ENCODE measurements at regions of chr15 and their contacts with region 1.

Region 1: GRCh38 chr15:41774062-41774881 is at the start of gene MAPKBP1:
- DNase-seq: peak; percentile 99
- H3K4me3 ChIP-seq: peak within 1 kb of the TSS; percentile 35 to 69 (median 56)
- H3K27ac ChIP-seq: peak within 1 kb of the TSS; percentile 48
- H3K4me1 ChIP-seq: peaks cover 54% of the 10 kb centered on the region
- H3K27me3 ChIP-seq: no peaks in the 10 kb centered on the region
- CTCF ChIP-seq: peak; percentile 93 to 94
- POLR2A ChIP-seq: no peak
- total RNA-seq, gene MAPKBP1: 49.1 and 55.8 TPM in 2 replicates

Region 2: DNA sequence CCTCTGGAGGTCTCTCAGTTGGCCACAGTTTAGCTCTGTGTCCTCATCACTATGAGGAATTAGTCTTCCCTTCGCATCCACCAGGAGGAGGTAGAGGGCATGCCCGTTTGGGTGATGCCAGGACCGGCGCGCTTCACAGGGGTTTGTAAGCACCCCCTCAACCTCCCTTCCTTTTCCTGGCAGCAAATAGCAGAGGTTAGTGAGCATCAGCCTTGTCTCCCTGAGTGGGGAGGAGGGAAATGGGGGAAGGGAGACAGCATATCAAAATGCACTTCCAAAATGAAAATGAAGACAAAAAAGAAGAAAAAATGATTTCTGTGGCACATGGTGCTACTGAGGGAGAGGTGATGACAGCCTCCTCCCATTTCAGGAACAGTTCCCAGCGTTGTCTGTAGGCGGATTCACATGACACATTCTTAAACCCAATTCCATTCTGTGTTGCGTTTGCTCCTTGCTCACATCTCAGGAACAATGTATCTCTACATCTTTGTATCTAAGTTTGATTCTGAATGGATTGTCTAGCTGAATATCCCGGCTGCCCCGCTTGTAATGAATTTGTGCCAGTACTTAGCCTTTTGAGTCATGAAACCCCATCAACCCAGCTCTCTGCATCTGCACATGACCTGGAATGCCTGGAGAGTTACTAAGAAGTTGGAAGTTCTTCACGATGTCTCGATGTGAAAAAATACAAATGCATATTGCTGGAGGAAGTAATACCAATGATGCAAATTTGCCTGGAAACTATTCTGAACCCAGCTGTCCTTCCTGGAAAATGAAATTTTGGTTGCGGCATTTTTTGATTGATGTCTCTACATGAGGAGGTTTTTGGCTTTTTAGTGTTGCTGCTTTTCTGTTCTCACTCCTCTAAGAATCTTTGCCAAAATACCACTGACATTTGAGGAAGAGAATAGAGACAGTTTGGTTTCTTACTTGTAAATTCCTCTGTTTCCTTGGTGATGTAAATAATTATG is 170.0 kb before region 1 on chr15:
- CTCF ChIA-PET with region 1: interaction called, 24 read pairs
- POLR2A ChIA-PET with region 1: no interaction called
- dilution Hi-C with region 1: no loop called
- intact Hi-C with region 1: loop called (anchors 1 kb)
- DNase-seq: peak; percentile 74
- H3K4me3 ChIP-seq: peak overlapping the region in 1 of 3 experiments; percentile 15
- H3K27ac ChIP-seq: no peak overlapping the region
- H3K4me1 ChIP-seq: peaks cover 7% of the 10 kb centered on the region
- H3K27me3 ChIP-seq: peaks cover 3 to 8% of the 10 kb centered on the region in 2 experiments
- CTCF ChIP-seq: peak; percentile 76 to 80
- POLR2A ChIP-seq: no peak

Region 3: GRCh38 chr15:41795996-41796856 is 22.0 kb after region 1 on chr15:
- CTCF ChIA-PET with region 1: interaction called, 754 read pairs
- POLR2A ChIA-PET with region 1: interaction called, 9 read pairs
- dilution Hi-C with region 1: no loop called
- intact Hi-C with region 1: loop called (anchors 1 kb)
- DNase-seq: peak; percentile 86
- H3K4me3 ChIP-seq: peak overlapping the region in 1 of 3 experiments; percentile 25
- H3K27ac ChIP-seq: peak overlapping the region; percentile 61
- H3K4me1 ChIP-seq: peaks cover 41% of the 10 kb centered on the region
- H3K27me3 ChIP-seq: no peaks in the 10 kb centered on the region
- CTCF ChIP-seq: no peak
- POLR2A ChIP-seq: no peak

Region 4: DNA sequence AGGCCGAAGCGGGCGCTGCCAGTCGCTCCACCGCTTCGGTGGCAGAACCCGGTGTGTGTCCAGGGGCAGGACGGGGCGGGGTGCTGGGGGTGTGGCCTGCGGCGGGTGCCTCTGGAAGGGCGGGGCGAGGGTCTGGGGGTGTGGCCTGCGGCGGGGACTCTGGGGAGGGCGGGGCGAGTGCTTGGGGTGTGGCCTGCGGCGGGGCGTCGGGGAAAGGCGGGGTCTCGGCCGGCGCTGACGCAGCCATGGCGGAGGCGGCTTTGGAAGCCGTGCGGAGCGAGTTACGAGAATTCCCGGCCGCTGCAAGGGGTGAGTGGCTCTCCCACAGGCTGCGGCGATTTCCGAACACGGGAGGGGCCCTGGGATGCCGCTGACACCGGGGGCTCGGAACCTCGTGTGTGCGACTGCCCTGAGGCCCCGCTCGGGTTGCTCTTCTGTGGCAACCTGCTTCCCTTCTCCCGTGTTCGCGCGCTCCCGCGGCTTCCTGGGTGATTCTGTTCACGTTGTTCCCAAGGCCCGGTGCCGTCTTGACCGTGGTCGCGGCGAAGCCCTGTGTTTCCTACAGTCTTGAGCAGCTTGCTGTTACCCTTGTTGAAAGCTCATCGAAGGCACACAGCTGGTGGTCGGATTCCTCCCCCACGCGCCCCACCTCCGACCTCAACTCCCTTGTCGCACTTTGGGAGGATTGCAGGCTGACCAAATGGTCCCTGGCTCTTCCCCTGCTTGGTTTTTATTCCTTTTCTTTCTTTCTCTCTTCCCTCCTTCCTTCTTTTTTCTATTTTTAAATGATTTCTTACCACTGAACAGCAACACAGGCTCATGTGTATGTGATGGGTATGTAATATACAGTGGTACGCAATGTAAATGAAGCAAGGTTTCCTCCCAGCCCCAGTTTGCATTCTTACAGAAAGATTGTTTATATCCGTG is 53.9 kb after region 1 on chr15 and contains the start of gene JMJD7:
- CTCF ChIA-PET with region 1: interaction called, 7 read pairs
- POLR2A ChIA-PET with region 1: no interaction called
- dilution Hi-C with region 1: no loop called
- intact Hi-C with region 1: loop called (anchors 1 kb)
- DNase-seq: peak; percentile 88
- H3K4me3 ChIP-seq: peak within 1 kb of the TSS; percentile 41 to 87 (median 73)
- H3K27ac ChIP-seq: no peak within 1 kb of the TSS
- H3K4me1 ChIP-seq: peaks cover 10% of the 10 kb centered on the region
- H3K27me3 ChIP-seq: no peaks in the 10 kb centered on the region
- CTCF ChIP-seq: no peak
- POLR2A ChIP-seq: peak; percentile 69
- total RNA-seq, gene JMJD7: 11.4 and 15.0 TPM in 2 replicates

Region 5: DNA sequence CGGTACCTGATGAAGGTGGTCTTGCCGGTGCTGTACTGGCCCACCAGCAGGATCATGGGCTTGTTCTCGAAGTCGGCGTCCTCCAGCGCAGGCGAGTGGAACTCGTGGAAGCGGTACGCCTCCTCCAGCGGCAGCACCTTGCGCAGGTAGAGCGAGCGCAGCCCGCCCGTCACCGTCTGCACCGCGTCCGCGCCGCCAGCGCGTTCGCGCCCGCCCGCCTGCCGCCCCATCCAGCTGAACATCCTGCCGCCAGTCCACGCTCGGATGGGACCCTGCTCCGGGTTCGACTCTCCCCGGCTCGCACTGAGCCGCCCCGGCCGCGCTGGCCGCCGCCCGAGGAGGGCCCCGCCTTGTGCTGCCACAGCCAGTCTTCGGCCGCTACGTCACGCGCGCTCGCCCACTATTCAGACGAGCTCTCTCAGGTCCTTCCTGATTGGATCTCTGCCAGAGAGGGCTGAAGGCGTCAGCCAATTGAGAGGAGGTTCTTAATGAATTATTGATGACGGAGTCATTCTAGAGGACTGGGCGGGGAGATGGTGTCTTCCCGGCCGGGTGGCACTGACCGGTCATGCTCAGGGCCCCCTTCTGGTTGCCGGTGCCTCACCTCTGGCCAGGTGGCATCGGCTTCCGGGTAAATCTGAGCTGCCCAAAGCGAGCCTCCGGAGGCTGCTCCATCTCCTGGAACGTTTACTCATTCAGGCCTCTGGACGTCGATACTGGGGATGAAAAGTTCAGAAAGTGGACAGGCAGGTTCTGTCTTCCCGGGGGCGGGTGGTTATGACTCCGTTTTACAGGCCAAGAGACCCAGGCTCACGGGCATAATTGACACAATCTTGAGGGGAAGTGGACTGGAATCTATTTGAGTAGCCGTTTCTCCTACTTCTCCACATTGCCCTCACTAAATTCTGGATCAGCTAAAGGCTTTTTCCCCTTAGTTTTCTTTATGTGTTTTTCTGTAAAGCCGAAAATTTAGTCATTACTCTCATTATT is 198.3 kb after region 1 on chr15 and contains the start of gene EHD4:
- CTCF ChIA-PET with region 1: interaction called, 3 read pairs
- POLR2A ChIA-PET with region 1: no interaction called
- dilution Hi-C with region 1: no loop called
- intact Hi-C with region 1: loop called (anchors 5 kb)
- DNase-seq: peak; percentile 98
- H3K4me3 ChIP-seq: peak within 1 kb of the TSS; percentile 84 to 100 (median 97)
- H3K27ac ChIP-seq: peak within 1 kb of the TSS; percentile 69
- H3K4me1 ChIP-seq: peaks cover 35% of the 10 kb centered on the region
- H3K27me3 ChIP-seq: no peaks in the 10 kb centered on the region
- CTCF ChIP-seq: peak; percentile 23 to 41
- POLR2A ChIP-seq: peak; percentile 98
- total RNA-seq, gene EHD4: 126 and 128 TPM in 2 replicates